ENCODE measurements at regions of chr10 and their contacts with region 1.

Region 1: GRCh38 chr10:104127411-104127810 is 5.4 kb downstream of the SFR1 start:
- DNase-seq: no peak
- ATAC-seq: peak; percentile 89
- H3K4me3 ChIP-seq: no peak overlapping the region
- H3K27ac ChIP-seq: 0 out of 2 replicates have a peak overlapping the region, but pooled peaks have one; percentile 0
- H3K4me1 ChIP-seq: peaks cover 20 to 35% of the 10 kb centered on the region in 2 experiments
- H3K27me3 ChIP-seq: no peaks in the 10 kb centered on the region
- CTCF ChIP-seq: peak in 2 of 3 experiments; percentile 76 to 77; a peak in 4 of 6 replicates
- POLR2A ChIP-seq: no peak
- RAD21 ChIP-seq: no peak

Region 2: DNA sequence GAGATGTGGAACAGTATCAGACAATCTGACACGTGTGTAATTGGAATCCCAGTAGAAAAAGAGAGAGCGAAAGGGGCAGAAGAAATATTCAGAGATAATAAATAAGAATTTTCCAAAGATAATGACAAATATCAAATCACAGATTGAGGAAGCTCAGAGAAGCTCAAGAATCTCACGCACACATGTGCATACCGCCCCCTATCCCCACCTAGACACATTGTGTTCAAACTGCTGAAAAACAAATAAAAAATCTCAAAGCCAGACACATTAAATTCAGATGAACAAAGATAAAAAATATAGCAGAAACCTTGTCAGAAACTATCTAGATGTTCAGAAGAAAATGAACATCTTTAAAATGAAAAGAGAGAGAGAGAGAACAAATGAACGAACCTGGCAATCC is 11.8 kb after region 1 on chr10:
- CTCF ChIA-PET with region 1: interaction called, 44 read pairs
- POLR2A ChIA-PET with region 1: no interaction called
- RAD21 ChIA-PET with region 1: no interaction called
- intact Hi-C with region 1: no loop called
- DNase-seq: no peak
- ATAC-seq: peak; percentile 84
- H3K4me3 ChIP-seq: no peak overlapping the region
- H3K27ac ChIP-seq: no peak overlapping the region
- H3K4me1 ChIP-seq: no peaks in the 10 kb centered on the region
- H3K27me3 ChIP-seq: no peaks in the 10 kb centered on the region
- CTCF ChIP-seq: peak; percentile 52 to 86 (median 80); a peak in 5 of 6 replicates
- POLR2A ChIP-seq: no peak
- RAD21 ChIP-seq: peak; percentile 77

Region 3: GRCh38 chr10:104209575-104210198 is 82.3 kb after region 1 on chr10:
- CTCF ChIA-PET with region 1: no interaction called
- POLR2A ChIA-PET with region 1: no interaction called
- RAD21 ChIA-PET with region 1: no interaction called
- intact Hi-C with region 1: loop called (anchors 2 kb)
- DNase-seq: peak; percentile 41
- ATAC-seq: peak; percentile 93
- H3K4me3 ChIP-seq: no peak overlapping the region
- H3K27ac ChIP-seq: no peak overlapping the region
- H3K4me1 ChIP-seq: no peaks in the 10 kb centered on the region
- H3K27me3 ChIP-seq: no peaks in the 10 kb centered on the region
- CTCF ChIP-seq: peak; percentile 81 to 92 (median 83)
- POLR2A ChIP-seq: no peak
- RAD21 ChIP-seq: peak; percentile 95

Measured in HCT116 (cell line).